Adrenal gland (tissue), 19 donors: ENCODE measurements at regions of chr4 and their contacts with region 1.

Region 1: DNA sequence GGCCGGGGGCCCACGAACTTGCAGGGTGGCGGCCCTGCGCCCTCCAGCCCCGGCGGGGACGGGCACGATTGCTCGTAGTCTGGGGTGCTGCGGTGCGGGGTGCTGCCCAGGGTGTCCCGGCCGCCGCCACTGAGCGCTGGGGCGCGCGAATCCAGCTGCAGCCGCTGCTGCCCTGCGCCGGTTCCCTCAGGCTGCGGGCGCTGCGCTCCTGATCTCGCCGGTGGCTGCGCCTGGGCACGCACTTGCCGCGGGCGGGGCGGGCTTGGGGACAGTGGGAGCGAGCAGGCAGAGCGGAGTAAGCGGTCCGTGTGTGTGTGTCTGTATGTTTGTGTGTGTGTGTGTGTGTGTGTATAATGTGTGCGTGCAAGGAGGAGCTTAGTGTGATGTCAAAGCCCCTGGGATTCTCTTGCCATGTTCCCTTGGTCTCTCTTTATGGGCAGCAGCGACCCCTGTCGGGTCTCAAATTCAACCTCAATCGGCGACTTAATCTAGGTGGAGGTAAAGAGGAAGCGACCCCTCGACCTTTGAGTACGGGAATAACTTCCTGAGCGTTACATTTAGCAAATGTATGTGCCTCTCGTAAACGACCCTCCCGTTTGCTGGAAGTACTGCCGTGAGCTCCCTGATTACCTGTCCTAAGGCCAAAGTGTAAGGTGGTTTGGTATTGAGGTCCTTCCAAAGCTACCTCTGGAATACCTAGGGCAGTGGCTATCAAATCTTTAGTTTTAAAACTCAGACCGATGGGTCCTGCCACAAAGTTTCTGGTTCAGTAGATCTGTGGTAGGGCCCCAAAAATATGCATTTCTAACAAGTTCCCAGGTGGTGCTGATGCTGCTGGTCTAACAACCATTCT is at the start of gene RNF150:
- DNase-seq: peak; percentile 80 to 94 (median 87)
- H3K4me3 ChIP-seq: peak within 1 kb of the TSS; percentile 58 to 95 (median 75)
- H3K27ac ChIP-seq: peak within 1 kb of the TSS in 4 of 5 donors; percentile 45 to 82 (median 66)
- H3K4me1 ChIP-seq: peaks cover 3 to 23% of the 10 kb centered on the region in 2 donors
- H3K27me3 ChIP-seq: no peaks in the 10 kb centered on the region
- CTCF ChIP-seq: peak; percentile 54 to 96 (median 84)
- POLR2A ChIP-seq: peak in 1 of 2 donors; percentile 57
- total RNA-seq, gene RNF150: 29.2 to 88.6 (median 68.2) TPM

Region 2: GRCh38 chr4:140861359-140862176 is 271.8 kb before region 1 on chr4:
- intact Hi-C with region 1: loop called (anchors 5 kb)
- DNase-seq: peak; percentile 69 to 92 (median 76)
- H3K4me3 ChIP-seq: no peak overlapping the region
- H3K27ac ChIP-seq: no peak overlapping the region
- H3K4me1 ChIP-seq: peaks cover 0 to 3% of the 10 kb centered on the region in 2 donors
- H3K27me3 ChIP-seq: no peaks in the 10 kb centered on the region
- CTCF ChIP-seq: peak; percentile 68 to 92 (median 90)
- POLR2A ChIP-seq: no peak

Region 3: GRCh38 chr4:140996766-140997165 is 136.6 kb before region 1 on chr4:
- intact Hi-C with region 1: loop called in 1 of 2 experiments (anchors 10 kb)
- DNase-seq: no peak
- H3K4me3 ChIP-seq: no peak overlapping the region
- H3K27ac ChIP-seq: no peak overlapping the region
- H3K4me1 ChIP-seq: peaks cover 32 to 35% of the 10 kb centered on the region in 2 donors
- H3K27me3 ChIP-seq: no peaks in the 10 kb centered on the region
- CTCF ChIP-seq: peak in 1 of 6 experiments; percentile 38
- POLR2A ChIP-seq: no peak